AG04449 (cell line): ENCODE measurements at regions of chr11 and their contacts with region 1.

Region 1: DNA sequence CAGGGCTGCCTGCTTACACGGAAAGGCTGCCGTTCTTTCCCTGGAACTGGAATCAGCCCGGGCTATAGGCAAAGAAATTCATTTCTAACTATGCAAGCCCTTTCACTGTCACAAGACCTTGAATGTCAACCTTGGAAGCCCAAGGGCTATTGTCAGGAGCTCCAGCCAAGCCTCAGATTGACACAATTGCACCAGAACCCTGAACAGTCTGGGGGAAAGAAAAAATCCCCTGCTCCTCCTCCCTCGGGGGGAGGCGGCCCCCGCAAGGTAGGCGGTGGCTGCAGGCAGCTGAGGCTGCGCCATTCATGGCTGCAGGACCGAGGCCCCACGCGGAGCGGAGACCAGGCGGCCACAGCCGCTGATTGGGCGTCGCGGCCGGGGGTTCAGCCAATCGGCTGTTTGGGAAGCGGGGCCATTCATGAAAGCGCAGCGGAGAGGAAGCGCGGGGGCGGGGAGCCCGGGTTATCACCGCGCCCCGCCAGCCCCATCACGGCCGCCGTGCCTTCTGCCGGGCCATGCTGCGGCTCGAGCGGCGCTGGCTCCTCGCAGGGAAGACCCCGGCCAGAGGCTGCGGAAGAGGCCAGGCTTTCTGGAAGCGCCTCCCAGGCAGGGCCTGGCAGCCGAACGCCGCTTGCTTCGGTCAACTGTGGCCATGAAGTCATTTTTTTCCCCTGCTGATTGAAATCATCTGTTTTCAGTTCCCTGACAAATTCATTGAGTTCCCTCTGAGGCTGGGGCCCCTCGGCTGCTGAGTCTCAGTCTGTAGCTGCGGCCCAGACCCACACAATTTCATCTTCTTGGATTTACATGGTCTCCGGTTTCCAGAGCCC is 38.1 kb upstream of the LINC01488 start:
- DNase-seq: no peak
- H3K4me3 ChIP-seq: peak overlapping the region; percentile 54
- CTCF ChIP-seq: no peak

Region 2: GRCh38 chr11:69431893-69432738 is 11.2 kb before region 1 on chr11:
- CTCF ChIA-PET with region 1: interaction called, 10 read pairs
- POLR2A ChIA-PET with region 1: no interaction called
- DNase-seq: no peak
- H3K4me3 ChIP-seq: no peak overlapping the region
- CTCF ChIP-seq: no peak

Region 3: DNA sequence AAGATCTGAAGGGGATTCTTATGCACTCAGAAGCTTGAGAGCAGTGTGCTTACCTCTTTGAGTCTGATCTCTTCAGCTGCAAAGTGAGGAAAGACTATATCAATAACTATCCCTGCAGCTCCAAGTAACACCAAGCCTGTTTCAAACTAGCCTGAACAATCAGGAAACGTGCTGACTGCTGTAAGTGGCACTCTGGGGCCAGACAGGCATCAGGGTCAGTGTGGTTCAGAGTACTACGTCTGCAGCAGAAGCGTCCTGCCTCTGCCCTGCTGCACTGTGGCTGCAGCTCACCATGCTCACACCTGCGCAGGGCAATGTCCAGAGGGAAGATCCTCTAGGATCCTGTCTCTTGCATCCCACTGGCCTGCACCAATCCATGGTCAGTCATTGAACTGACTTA is 12.6 kb after region 1 on chr11:
- CTCF ChIA-PET with region 1: interaction called, 12 read pairs
- POLR2A ChIA-PET with region 1: interaction called, 3 read pairs
- DNase-seq: no peak
- H3K4me3 ChIP-seq: no peak overlapping the region
- CTCF ChIP-seq: no peak